Dendritic cell treated with granulocyte-macrophage colony-stimulating factor and Interleukin-4, amounts not matched to agents 40 ng/mL and 50 ng/mL, for 4 days (primary cell): ENCODE measurements at regions of chr5 and their contacts with region 1.

Region 1: GRCh38 chr5:153964880-153965645 is 73.6 kb downstream of the FAM114A2 start:
- H3K4me3 Mint-ChIP-seq: no peak overlapping the region
- H3K27ac Mint-ChIP-seq: no peak overlapping the region
- H3K4me1 Mint-ChIP-seq: no peaks in the 10 kb centered on the region
- H3K27me3 Mint-ChIP-seq: no peaks in the 10 kb centered on the region

Region 2: GRCh38 chr5:152532714-152533113 is 1432.3 kb before region 1 on chr5:
- intact Hi-C with region 1: loop called (anchors 1 kb)
- H3K4me3 Mint-ChIP-seq: no peak overlapping the region
- H3K27ac Mint-ChIP-seq: no peak overlapping the region
- H3K4me1 Mint-ChIP-seq: peaks cover 8% of the 10 kb centered on the region
- H3K27me3 Mint-ChIP-seq: no peaks in the 10 kb centered on the region

Region 3: DNA sequence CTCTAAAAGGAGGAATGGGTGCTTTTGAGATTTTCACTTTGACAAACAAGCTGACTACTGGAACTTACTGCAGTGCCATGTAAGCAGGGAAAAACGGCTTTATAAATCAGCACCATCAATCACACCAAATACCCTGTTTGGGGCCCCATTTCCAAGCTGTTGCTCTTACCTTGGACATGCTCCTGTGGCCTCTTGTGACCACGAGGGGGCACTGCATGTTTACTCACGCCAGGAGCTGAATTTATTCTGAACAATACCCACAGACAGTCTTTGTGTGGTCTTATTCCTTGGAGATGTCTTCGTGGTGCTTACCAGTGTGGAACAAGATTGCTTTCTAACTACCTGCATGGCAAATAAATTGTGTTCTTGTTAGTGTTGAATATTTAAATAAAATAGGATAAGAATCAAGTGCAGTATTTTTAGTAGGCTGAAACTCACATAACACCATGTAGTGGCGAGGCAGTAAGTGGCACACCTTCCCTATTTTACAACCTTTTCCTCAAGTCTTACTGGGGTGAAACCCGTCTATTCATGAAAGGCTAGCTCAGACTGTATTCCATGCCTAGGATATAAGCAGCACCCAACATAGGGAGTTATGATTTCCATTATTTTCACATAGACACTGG is 1404.4 kb before region 1 on chr5:
- intact Hi-C with region 1: loop called (anchors 10 kb)
- H3K4me3 Mint-ChIP-seq: no peak overlapping the region
- H3K27ac Mint-ChIP-seq: no peak overlapping the region
- H3K4me1 Mint-ChIP-seq: no peaks in the 10 kb centered on the region
- H3K27me3 Mint-ChIP-seq: no peaks in the 10 kb centered on the region

Region 4: GRCh38 chr5:153496835-153497234 is 468.2 kb before region 1 on chr5:
- intact Hi-C with region 1: loop called (anchors 10 kb)
- H3K4me3 Mint-ChIP-seq: no peak overlapping the region
- H3K27ac Mint-ChIP-seq: no peak overlapping the region
- H3K4me1 Mint-ChIP-seq: no peaks in the 10 kb centered on the region
- H3K27me3 Mint-ChIP-seq: peaks cover 4% of the 10 kb centered on the region

Region 5: DNA sequence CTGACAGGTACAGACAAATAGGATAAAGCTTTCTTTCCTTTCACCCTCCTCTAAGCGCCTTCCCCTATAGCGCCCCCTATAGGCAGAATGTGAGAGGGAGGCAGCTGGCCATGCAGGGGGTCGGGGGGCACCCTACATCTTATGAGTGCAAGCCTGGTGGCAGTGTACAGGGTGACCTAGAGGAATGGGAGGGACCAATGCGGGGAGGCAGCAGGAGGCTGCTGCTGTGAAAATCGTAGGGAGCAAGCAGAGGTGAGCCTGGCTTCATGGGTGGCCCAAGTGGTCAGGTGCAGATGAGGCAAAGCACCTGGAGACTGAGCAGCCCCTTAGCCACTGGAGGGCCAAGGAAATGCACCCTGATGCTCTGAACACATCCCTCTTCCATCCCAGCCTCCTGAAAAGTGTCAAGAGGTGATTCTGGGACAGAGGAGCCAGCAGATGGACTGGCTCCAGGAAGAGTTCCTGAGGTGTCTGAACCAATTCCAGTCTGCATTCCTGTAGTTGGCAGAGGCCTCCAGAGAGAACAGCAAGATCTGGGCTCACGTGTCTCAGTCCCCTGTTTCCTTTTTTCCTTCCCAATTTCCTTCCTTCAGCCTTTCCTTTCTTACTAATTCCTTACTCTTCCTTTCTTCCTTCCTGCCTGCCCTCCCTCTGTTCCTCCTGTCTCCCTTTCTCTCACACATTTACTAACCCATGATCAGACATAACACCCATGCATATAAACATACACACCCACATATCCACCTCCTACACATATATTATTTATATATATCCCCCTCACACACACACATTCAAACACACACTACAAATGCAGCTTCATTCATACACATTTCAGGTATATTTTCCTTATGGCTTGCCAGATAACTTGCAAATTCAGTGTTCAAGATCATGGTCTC is 192.7 kb after region 1 on chr5:
- intact Hi-C with region 1: no loop called
- H3K4me3 Mint-ChIP-seq: no peak overlapping the region
- H3K27ac Mint-ChIP-seq: no peak overlapping the region
- H3K4me1 Mint-ChIP-seq: no peaks in the 10 kb centered on the region
- H3K27me3 Mint-ChIP-seq: peaks cover 29% of the 10 kb centered on the region